ENCODE measurements at regions of chr17 and their contacts with region 1.

Region 1: GRCh38 chr17:18260332-18261144 is at the start of gene MIEF2:
- DNase-seq: peak; percentile 96 to 99 (median 98)
- ATAC-seq: peak; percentile 91 to 92
- H3K4me3 ChIP-seq: peak within 1 kb of the TSS; percentile 66
- H3K27ac ChIP-seq: peak within 1 kb of the TSS; percentile 86
- H3K4me1 ChIP-seq: peaks cover 14% of the 10 kb centered on the region
- H3K27me3 ChIP-seq: no peaks in the 10 kb centered on the region
- total RNA-seq, gene MIEF2: 17.6 to 20.7 (median 19.6) TPM

Region 2: GRCh38 chr17:18203308-18203707 is 57.2 kb before region 1 on chr17:
- intact Hi-C with region 1: loop called in 1 of 4 experiments (anchors 10 kb)
- DNase-seq: peak in 1 of 3 donors; percentile 6
- ATAC-seq: no peak
- H3K4me3 ChIP-seq: no peak overlapping the region
- H3K27ac ChIP-seq: no peak overlapping the region
- H3K4me1 ChIP-seq: peaks cover 11% of the 10 kb centered on the region
- H3K27me3 ChIP-seq: no peaks in the 10 kb centered on the region

Region 3: DNA sequence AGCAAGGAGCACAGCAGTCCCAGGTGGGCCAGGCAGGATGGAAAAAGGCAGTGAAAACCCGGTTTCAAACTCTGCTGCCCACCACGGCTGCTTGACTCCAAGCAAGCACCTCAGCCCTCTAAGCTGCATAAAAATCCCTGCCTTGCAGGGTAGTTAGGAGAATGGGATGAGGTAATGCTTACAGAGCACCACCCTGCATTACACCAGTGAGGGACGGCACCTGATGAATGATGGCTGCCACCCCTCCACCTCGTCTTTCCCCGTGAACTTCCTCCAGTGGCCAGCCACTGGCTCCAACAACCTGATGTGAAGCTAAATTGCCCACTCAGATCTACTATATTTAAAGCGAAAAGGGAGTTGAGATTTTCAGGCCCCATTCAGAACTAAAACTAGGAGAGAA is 21.2 kb after region 1 on chr17:
- intact Hi-C with region 1: loop called in 1 of 4 experiments (anchors 2 kb)
- DNase-seq: no peak
- ATAC-seq: no peak
- H3K4me3 ChIP-seq: no peak overlapping the region
- H3K27ac ChIP-seq: no peak overlapping the region
- H3K4me1 ChIP-seq: no peaks in the 10 kb centered on the region
- H3K27me3 ChIP-seq: no peaks in the 10 kb centered on the region

Measured in right cardiac atrium (tissue), 5 donors.